A549 (cell line): ENCODE measurements at regions of chr11 and their contacts with region 1.

Region 1: GRCh38 chr11:75562048-75562835 is at the start of gene SERPINH1:
- DNase-seq: peak; percentile 89 to 97
- ATAC-seq: peak; percentile 89 to 95
- H3K4me3 ChIP-seq: peak within 1 kb of the TSS; percentile 90
- H3K27ac ChIP-seq: peak within 1 kb of the TSS; percentile 97
- H3K4me1 ChIP-seq: peaks cover 62% of the 10 kb centered on the region
- CTCF ChIP-seq: no peak
- EP300 ChIP-seq: no peak
- POLR2A ChIP-seq: peak; percentile 91
- RAD21 ChIP-seq: no peak
- polyA plus RNA-seq, gene SERPINH1: 70.7 and 79.3 TPM in 2 replicates

Region 2: DNA sequence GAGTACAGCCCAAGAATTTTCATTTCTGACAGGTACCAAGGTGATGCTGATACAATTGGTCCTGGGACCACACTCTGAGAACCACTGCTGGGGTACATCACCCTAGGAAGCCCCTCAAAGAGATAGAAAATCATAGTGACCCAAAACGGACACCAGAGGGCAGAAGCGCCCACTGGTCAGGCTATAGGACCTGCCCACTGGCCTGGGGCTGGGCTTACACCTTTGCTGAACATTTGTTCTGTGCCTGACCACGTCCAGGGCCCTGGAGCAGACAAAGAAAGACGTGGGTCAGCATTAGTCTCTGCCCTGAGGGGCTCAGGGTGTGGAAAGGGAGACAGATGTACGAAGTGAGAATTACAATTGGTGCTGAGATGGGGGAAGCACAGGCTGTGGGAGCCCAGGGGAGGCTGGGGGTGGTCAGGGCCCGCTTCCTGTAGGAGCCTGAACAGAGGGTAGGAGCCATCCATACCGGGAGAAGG is 14.6 kb before region 1 on chr11:
- CTCF ChIA-PET with region 1: interaction called, 27 read pairs
- POLR2A ChIA-PET with region 1: interaction called, 5 read pairs
- DNase-seq: peak; percentile 53 to 89
- ATAC-seq: peak; percentile 87 to 96
- H3K4me3 ChIP-seq: no peak overlapping the region
- H3K27ac ChIP-seq: peak overlapping the region in 1 of 2 experiments; percentile 43; a peak in 1 of 6 replicates
- H3K4me1 ChIP-seq: no peaks in the 10 kb centered on the region; the same call in 2 of the 3 replicates
- CTCF ChIP-seq: peak; percentile 89
- EP300 ChIP-seq: no peak
- POLR2A ChIP-seq: no peak
- RAD21 ChIP-seq: peak; percentile 88 to 89